CD8-positive, alpha-beta T cell (primary cell): ENCODE measurements at regions of chr12 and their contacts with region 1.

Region 1: GRCh38 chr12:64403707-64404469 is at the start of gene XPOT:
- DNase-seq: peak; percentile 85 to 99 (median 90)
- ATAC-seq: peak; percentile 87
- H3K4me3 ChIP-seq: peak within 1 kb of the TSS; percentile 92 to 98
- H3K4me3 Mint-ChIP-seq: peak within 1 kb of the TSS; percentile 97
- H3K27ac ChIP-seq: peak within 1 kb of the TSS; percentile 79 to 85
- H3K27ac Mint-ChIP-seq: peak within 1 kb of the TSS; percentile 98
- H3K4me1 ChIP-seq: peaks cover 9% of the 10 kb centered on the region
- H3K4me1 Mint-ChIP-seq: peaks cover 28% of the 10 kb centered on the region
- H3K27me3 ChIP-seq: no peaks in the 10 kb centered on the region
- H3K27me3 Mint-ChIP-seq: no peaks in the 10 kb centered on the region
- CTCF ChIP-seq: no peak
- total RNA-seq, gene XPOT: 37.9 to 39.5 TPM

Region 2: GRCh38 chr12:63843721-63844390 is 560.0 kb before region 1 on chr12:
- CTCF ChIA-PET with region 1: no interaction called
- POLR2A ChIA-PET with region 1: no interaction called
- intact Hi-C with region 1: loop called in 1 of 2 experiments (anchors 1 kb)
- DNase-seq: peak; percentile 61 to 91 (median 78)
- ATAC-seq: peak; percentile 94
- H3K4me3 ChIP-seq: peak overlapping the region; percentile 49 to 69
- H3K4me3 Mint-ChIP-seq: peak overlapping the region; percentile 76
- H3K27ac ChIP-seq: no peak overlapping the region
- H3K27ac Mint-ChIP-seq: no peak overlapping the region
- H3K4me1 ChIP-seq: peaks cover 7% of the 10 kb centered on the region
- H3K4me1 Mint-ChIP-seq: peaks cover 10% of the 10 kb centered on the region
- H3K27me3 ChIP-seq: peaks cover 0 to 13% of the 10 kb centered on the region in 2 experiments
- H3K27me3 Mint-ChIP-seq: peaks cover 32% of the 10 kb centered on the region
- CTCF ChIP-seq: peak; percentile 78

Region 3: GRCh38 chr12:64451687-64452558 is 48.0 kb after region 1 on chr12 and contains the start of gene TBK1:
- CTCF ChIA-PET with region 1: no interaction called
- POLR2A ChIA-PET with region 1: interaction called, 3 read pairs
- intact Hi-C with region 1: loop called (anchors 1 to 2 kb)
- DNase-seq: peak; percentile 8 to 76 (median 51)
- ATAC-seq: peak; percentile 64
- H3K4me3 ChIP-seq: peak within 1 kb of the TSS; percentile 88 to 99
- H3K4me3 Mint-ChIP-seq: peak within 1 kb of the TSS; percentile 89
- H3K27ac ChIP-seq: peak within 1 kb of the TSS; percentile 76 to 93
- H3K27ac Mint-ChIP-seq: peak within 1 kb of the TSS; percentile 90
- H3K4me1 ChIP-seq: peaks cover 8% of the 10 kb centered on the region
- H3K4me1 Mint-ChIP-seq: peaks cover 40% of the 10 kb centered on the region
- H3K27me3 ChIP-seq: no peaks in the 10 kb centered on the region
- H3K27me3 Mint-ChIP-seq: no peaks in the 10 kb centered on the region
- CTCF ChIP-seq: no peak
- total RNA-seq, gene TBK1: 6.2 to 6.7 TPM

Region 4: DNA sequence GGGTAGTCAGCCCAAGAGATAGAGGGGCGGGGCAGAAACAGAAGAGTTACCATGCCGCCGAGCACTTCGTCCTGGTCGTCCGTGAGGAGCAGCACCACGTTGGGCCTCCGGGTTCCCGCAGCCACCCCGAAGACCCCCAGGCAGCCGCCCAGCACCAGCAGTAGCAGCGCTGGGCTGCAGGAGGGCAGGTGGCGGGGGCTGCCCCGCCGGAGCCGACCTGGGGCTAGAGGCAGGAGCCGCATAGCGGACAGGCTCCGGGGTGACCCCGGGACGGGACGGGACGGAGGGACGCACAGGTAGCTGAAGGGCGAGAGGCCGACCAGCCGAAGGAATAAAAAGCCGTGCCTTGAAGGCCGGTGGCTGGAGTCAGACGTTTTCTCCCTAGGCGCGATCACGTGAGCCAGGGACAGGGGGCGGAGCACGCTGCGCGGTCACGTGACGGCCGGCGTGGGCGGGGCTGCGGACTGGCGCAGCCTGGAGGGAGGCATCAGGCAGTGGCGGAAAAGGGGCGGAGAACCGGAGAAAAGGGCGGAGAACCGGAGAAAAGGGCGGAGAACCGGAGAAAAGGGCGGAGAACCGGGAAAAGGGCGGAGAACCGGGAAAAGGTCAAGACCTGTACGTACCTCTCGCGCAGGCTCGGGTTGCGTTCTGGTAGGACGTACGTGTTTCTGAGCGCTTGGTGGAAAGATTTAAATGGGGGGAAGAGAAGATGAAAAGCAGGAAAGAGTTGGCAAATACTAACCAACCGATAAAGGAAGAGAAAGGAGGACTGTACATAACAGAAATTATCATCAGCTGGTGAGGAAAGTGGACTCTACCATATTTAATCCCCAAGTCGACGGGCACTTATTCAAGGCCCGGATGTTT is 355.4 kb after region 1 on chr12 and contains the start of gene GNS:
- CTCF ChIA-PET with region 1: no interaction called
- POLR2A ChIA-PET with region 1: no interaction called
- intact Hi-C with region 1: loop called (anchors 1 to 2 kb)
- DNase-seq: peak; percentile 81 to 95 (median 92)
- ATAC-seq: peak; percentile 86
- H3K4me3 ChIP-seq: peak within 1 kb of the TSS; percentile 70 to 80
- H3K4me3 Mint-ChIP-seq: peak within 1 kb of the TSS; percentile 97
- H3K27ac ChIP-seq: peak within 1 kb of the TSS; percentile 44 to 80
- H3K27ac Mint-ChIP-seq: peak within 1 kb of the TSS; percentile 93
- H3K4me1 ChIP-seq: peaks cover 24% of the 10 kb centered on the region
- H3K4me1 Mint-ChIP-seq: peaks cover 57% of the 10 kb centered on the region
- H3K27me3 ChIP-seq: no peaks in the 10 kb centered on the region
- H3K27me3 Mint-ChIP-seq: no peaks in the 10 kb centered on the region
- CTCF ChIP-seq: no peak
- total RNA-seq, gene GNS: 6.3 to 7.7 TPM